ENCODE measurements at regions of chr3 and their contacts with region 1.

Region 1: GRCh38 chr3:52001443-52001974 is 5.8 kb upstream of the RPL29 start:
- DNase-seq: no peak
- H3K4me3 ChIP-seq: no peak overlapping the region
- CTCF ChIP-seq: peak; percentile 96

Region 2: DNA sequence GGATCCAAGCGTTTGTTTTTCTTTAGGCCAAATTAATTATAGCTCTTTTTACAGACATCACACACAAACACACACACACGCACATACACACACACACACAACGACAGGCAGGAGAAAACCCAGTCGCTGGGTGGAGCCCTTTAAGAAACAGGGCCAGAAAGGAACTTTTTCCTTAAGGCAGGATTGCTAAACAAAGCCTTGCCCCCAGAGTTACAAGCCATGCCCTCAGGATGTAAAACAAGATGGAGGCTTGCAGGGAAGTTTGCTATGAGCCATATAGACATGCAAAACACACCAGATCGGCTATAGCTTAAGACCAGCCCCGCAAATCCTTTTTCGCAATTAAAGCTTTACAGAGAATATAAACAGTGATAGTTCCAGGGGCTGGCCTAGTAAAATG is 156.4 kb before region 1 on chr3:
- CTCF ChIA-PET with region 1: no interaction called
- POLR2A ChIA-PET with region 1: no interaction called
- DNase-seq: no peak
- H3K4me3 ChIP-seq: no peak overlapping the region
- CTCF ChIP-seq: no peak

Region 3: DNA sequence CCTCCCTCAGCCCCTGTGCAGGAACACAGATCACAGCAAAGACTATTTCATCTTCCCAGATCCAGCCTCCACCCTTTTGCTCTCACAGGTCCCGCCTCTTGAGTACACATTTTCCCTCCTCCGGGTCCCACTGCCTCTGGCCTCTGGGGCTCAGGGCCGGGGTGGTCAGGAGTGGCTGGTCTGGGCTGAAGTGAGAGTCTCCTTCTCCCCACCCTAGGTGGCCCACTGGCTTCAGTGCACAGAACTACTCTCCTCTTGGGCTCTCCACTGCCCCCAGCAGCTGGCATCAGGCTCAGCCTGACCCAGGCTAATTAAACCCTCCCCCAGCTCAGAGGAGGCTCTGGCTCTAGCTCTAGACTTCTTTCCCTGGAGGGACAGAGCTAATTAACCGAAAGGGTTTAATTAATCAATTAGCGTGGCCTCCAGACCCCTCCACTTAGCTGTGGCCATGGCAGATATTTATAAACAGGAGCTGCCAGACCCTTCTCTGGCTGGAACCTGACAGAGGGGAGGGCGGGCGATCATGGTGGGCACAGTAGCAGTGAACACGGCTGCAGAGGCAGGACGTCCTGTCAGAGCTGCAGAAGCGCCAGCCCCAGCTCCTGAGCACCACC is 39.7 kb after region 1 on chr3:
- CTCF ChIA-PET with region 1: interaction called, 17 read pairs
- POLR2A ChIA-PET with region 1: interaction called, 5 read pairs
- DNase-seq: no peak
- H3K4me3 ChIP-seq: no peak overlapping the region
- CTCF ChIP-seq: peak; percentile 41

Region 4: DNA sequence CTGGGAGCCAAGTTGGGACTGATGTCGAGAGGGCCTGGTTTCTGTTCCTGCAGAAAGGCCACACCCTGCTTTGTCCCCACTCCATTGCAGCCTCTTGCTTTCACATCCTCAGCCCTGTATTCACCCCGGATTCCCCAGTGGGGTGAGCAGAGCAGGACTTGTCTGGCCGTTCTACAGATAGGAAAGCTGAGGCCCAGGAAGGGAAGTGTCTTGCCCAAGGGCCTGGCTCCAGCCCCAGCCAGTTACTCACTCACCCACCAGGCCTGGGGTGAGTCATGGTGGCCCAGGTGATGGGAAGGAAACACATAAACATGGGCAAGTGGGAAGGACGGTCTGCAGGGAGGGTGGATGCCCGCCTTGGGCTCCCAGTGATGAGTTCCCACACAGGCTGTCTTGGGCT is 61.0 kb after region 1 on chr3:
- CTCF ChIA-PET with region 1: interaction called, 160 read pairs
- POLR2A ChIA-PET with region 1: interaction called, 8 read pairs
- DNase-seq: peak; percentile 56
- H3K4me3 ChIP-seq: no peak overlapping the region
- CTCF ChIP-seq: no peak

Region 5: DNA sequence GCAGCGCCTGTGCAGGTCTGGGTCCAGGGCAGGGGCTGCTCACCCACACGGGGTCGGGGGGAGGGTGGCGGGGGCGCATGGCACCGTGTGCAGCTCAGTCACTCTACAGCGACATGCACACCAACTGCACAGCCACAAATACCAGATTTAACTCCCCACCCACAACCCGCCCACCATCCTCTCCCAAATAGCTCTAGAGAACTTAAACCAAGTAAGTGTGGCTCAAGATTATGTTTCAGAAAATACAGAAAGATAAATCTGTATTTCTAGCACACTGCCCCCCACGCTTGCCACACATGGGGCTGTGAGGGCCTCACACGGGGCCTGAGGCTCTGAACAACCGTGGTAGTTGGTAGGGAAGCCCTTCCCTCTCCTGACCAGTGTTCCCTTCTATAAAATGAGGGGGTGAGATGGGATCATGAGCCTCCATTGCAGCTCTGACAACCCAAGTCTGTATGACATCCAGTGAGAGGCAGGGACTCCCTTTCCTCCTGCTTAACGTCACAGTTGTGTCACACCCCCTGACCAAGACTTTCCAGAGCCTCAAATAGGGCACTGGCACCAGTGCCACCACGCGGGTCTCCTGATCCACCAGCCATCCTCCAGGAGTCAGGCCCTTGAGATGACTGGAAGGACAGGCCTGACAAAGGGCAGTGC is 129.6 kb after region 1 on chr3:
- CTCF ChIA-PET with region 1: interaction called, 779 read pairs
- POLR2A ChIA-PET with region 1: no interaction called
- DNase-seq: no peak
- H3K4me3 ChIP-seq: no peak overlapping the region
- CTCF ChIP-seq: no peak

Region 6: GRCh38 chr3:52204337-52205073 is 203.0 kb after region 1 on chr3:
- CTCF ChIA-PET with region 1: interaction called, 18 read pairs
- POLR2A ChIA-PET with region 1: no interaction called
- DNase-seq: no peak
- H3K4me3 ChIP-seq: no peak overlapping the region
- CTCF ChIP-seq: no peak